ENCODE measurements at regions of chr5 and their contacts with region 1.

Region 1: GRCh38 chr5:81301271-81302015 is at the start of gene ZCCHC9:
- DNase-seq: peak; percentile 76
- H3K4me3 ChIP-seq: peak within 1 kb of the TSS; percentile 98
- CTCF ChIP-seq: peak; percentile 22

Region 2: DNA sequence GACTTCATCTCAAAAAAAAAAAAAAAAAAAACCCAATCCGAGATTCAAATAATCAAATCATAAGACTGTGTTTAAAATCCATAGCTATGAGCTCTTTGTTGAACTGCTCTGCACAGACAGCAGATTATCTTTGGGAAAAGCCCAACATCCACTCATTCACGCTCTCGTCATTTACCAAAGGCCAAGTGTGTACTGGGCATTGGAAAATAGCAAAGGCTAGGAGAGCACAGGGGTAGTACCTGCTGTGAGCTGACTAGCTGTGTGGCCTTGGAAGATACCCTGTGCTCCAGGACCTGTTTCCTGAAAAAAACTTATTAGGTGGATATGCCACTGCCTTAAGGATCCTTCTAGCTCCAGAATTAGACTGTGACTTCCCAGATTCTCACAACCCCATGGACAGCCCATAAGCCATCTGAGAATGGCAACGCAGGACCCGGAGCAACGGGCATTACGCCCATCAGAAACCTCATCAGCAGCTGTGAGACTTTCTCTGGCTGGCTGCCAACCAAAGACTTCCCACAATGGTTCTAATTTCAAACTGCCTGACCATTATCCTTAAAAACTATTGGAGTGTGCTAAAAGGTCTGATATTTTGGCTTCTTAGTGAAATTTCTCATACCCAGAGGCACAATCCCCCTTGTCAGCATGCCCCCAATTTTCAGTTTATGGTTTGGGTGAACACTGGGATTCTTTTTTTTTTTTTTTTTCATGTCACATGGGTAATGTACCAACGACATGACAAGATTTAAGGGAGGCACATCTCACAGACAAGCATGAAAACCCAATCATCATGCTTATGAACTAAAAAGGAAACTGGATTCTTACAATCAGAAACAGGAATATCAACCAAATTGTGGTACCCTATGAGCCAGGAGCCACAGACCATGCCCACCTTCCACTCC is 1062.4 kb before region 1 on chr5:
- CTCF ChIA-PET with region 1: no interaction called
- POLR2A ChIA-PET with region 1: no interaction called
- DNase-seq: no peak
- H3K4me3 ChIP-seq: no peak overlapping the region
- CTCF ChIP-seq: no peak

Region 3: DNA sequence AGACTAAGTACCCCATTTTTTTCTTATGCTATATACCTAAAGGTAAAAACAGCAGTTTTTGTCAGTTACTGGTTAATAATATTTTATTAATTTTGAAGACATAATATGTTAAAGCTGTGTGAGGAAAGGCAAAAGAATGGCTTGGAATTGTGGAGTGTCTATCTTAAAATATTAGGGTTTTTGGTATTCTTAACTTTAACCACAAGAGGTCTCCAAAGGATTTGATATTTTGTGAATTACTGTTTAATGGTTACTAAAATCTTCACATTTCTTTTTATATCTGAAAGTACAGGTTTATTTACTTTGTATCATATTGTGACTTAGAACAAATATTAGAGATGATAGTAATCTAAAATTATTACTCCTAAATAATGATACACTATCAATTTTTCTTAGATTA is 614.7 kb before region 1 on chr5:
- CTCF ChIA-PET with region 1: interaction called, 48 read pairs
- POLR2A ChIA-PET with region 1: no interaction called
- DNase-seq: no peak
- H3K4me3 ChIP-seq: no peak overlapping the region
- CTCF ChIP-seq: no peak

Region 4: DNA sequence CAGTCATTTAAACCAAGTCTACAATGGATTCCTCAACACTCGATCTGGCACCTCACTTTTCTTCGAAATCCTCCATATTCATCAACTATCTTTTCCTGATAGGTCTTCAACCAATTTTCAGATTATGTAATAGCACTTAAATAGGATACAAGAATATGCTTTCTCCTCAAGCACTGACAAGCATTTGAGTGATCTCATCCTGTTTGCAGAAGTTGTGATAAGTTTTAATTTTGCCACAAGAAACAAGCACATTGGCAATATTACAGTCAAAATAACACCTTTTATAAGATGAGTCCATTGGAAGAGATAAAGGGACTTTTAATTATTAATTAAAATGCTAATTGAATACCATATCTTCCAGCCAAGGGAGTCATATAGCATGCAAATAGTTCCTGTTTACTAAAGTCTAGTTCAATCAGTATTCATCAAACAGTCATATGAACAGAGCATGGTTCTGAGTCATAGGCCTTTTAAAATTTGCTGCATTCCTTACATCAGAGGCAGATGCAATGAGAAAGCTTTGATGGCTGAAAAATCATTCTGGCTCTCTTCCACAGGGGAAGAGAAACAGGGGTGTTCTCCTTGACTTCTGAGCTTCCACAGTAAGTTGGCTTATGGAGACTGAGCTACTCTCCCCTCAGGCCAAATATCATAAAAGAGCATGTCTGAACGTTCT is 32.8 kb before region 1 on chr5:
- CTCF ChIA-PET with region 1: interaction called, 32 read pairs
- POLR2A ChIA-PET with region 1: interaction called, 5 read pairs
- DNase-seq: peak; percentile 67
- H3K4me3 ChIP-seq: no peak overlapping the region
- CTCF ChIP-seq: no peak

Region 5: DNA sequence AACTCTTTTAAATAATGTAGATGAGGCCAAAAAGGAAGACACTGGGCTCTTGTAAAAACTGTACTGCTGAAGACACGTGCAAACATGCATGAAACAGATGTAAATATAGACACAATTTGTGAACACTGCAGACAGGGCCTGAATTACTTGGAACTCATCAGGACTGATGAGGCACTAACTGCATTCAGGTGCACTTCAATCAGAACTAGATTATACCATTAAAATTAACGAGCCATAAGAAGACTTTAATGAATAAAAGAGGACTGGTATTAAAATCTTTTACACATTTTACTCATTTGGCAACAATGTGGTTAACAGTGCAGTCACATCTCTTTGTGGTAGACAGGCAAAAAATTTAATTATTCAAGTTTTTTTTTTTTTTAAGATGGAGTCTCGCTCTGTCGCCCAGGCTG is 13.4 kb before region 1 on chr5:
- CTCF ChIA-PET with region 1: interaction called, 28 read pairs
- POLR2A ChIA-PET with region 1: no interaction called
- DNase-seq: no peak
- H3K4me3 ChIP-seq: no peak overlapping the region
- CTCF ChIP-seq: no peak

Region 6: DNA sequence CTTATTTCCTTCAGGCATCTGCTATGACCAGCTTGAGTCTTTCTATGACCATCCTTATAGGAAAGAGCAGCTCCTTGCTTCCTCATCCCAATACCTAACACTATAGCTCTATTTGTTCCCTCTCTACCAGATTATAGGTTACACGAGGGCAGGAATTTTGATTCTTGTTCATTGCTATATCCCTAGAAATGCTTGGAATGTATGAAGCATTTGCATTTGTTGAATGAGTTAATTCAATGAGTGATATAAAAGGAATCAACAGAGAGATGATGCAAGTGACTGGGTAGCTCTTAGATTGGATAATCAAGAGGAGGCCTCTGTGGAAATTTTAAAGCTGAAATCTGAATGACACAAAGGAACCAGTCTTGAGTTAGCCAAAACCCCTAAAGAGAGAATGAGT is 13.9 kb after region 1 on chr5:
- CTCF ChIA-PET with region 1: interaction called, 30 read pairs
- POLR2A ChIA-PET with region 1: interaction called, 7 read pairs
- DNase-seq: peak; percentile 44
- H3K4me3 ChIP-seq: no peak overlapping the region
- CTCF ChIP-seq: no peak

Measured in AG04449 (cell line).